Gastrocnemius medialis (tissue), 4 donors: ENCODE measurements at regions of chr7 and their contacts with region 1.

Region 1: GRCh38 chr7:78912781-78913180 is 540.7 kb downstream of the MAGI2 start:
- DNase-seq: no peak
- ATAC-seq: no peak
- H3K4me3 ChIP-seq: no peak overlapping the region
- H3K27ac ChIP-seq: no peak overlapping the region
- H3K4me1 ChIP-seq: no peaks in the 10 kb centered on the region
- H3K27me3 ChIP-seq: no peaks in the 10 kb centered on the region
- CTCF ChIP-seq: no peak
- POLR2A ChIP-seq: no peak

Region 2: DNA sequence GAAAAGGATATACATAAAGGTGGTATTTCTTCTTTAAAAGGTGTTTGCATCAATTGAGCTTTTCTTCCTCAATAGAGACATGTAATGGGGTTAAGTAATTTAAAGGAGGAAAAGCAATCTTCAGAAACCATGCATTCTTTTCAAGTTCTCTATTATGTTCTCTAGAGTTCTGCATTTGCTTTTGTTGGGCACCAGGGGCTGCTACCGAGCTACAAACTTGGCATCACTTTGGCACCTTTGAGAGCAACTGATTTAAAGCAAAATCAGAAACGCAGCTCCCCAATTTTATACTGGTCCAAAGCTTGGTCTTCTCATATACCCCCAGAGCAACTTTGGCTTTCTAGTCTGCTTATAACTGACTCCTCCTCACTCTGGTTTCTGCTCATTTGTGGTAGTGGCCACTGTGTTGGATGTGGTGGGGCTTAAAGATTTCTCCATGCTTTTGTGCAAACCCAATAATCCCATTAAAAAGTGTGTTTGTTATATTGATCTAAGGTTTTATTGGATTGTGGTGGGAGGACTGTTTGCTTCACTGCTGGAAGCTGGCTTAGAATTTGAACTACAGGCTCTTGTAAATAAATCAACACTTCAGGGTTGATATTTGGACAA is 402.1 kb before region 1 on chr7:
- in situ Hi-C with region 1: no loop called
- intact Hi-C with region 1: loop called (anchors 10 kb)
- DNase-seq: no peak
- ATAC-seq: no peak
- H3K4me3 ChIP-seq: no peak overlapping the region
- H3K27ac ChIP-seq: no peak overlapping the region
- H3K4me1 ChIP-seq: no peaks in the 10 kb centered on the region
- H3K27me3 ChIP-seq: no peaks in the 10 kb centered on the region
- CTCF ChIP-seq: peak in 4 of 5 experiments; percentile 38 to 54 (median 48)
- POLR2A ChIP-seq: no peak